SK-N-SH (cell line): ENCODE measurements at regions of chr17 and their contacts with region 1.

Region 1: DNA sequence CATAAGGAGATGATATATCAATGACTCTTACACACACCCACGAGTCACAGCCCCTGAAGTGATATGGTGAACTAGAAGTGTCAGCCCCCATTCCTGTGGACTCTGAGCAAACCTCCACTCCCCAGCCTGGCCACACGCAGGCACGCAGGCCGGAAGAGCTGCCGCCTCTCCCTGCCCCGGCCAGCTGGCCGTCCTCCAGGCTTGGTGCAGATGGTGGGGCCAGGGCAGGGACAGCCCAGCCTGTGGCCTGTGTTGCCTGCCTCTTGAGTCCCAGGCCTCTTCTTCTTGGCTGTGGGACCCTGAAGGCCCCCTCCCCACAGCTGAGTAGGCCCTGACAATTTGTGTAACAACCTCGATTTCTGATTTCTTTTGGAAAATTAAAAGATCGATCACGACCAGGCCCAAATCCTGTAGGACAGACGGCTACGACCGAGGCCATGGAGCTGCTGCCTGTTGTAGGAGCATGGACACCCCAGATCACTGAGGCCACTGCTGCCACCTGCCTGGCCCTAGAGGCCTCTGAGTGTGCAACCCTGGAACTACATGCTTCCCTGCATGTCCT is 10.0 kb upstream of the MPRIP start:
- DNase-seq: peak; percentile 85
- H3K4me3 ChIP-seq: no peak overlapping the region
- H3K27ac ChIP-seq: peak overlapping the region; percentile 52 to 96
- H3K4me1 ChIP-seq: peaks cover 9 to 65% of the 10 kb centered on the region in 2 experiments; a peak in 3 of 4 replicates
- H3K27me3 ChIP-seq: no peaks in the 10 kb centered on the region
- CTCF ChIP-seq: no peak
- EP300 ChIP-seq: no peak
- RAD21 ChIP-seq: peak; percentile 24; the same call in 1 of the 2 replicates

Region 2: DNA sequence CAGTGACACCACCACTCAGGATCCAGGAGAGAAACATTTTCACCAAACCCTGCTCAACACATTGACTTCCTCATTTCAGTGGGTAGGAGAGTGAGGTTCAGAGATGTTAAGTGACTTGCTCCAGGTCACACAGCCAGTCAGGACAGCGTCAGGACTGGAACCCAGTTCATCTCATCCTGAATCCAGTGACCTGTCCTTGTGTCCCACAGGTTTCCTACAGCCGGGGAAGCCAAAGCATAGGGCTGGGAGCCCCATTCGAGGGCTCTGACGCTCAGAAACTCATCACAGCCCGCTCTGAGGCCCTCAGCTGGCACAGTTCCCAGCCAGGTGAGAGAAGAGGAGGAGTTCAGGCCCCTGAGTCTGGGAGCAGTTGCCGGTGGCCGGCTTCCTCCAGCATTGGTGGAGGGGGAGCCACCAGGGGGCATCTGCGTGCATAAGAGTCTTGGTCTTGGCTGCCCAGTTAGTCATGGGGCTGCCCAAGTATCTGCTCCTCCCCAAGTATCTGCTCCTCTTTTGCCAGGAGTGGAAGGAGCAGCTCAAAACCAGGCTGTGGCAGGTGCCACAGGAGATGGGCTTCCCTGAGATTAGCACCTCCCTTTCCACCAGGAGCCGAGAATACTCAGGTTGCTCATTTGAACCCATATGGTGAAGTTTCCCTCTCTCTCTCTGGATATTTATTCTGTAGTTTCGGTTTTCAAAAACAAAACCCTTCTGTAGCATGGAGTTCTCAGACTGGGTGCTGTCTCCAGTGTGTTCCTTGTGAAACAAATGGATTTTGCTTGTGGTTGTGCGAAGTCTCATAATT is 116.3 kb before region 1 on chr17:
- CTCF ChIA-PET with region 1: no interaction called
- POLR2A ChIA-PET with region 1: no interaction called
- DNase-seq: peak; percentile 64
- H3K4me3 ChIP-seq: no peak overlapping the region
- H3K27ac ChIP-seq: no peak overlapping the region
- H3K4me1 ChIP-seq: no peaks in the 10 kb centered on the region
- H3K27me3 ChIP-seq: peaks cover 30% of the 10 kb centered on the region; the same call in 1 of the 2 replicates
- CTCF ChIP-seq: peak; percentile 47
- EP300 ChIP-seq: no peak
- RAD21 ChIP-seq: peak; percentile 35; the same call in 1 of the 2 replicates

Region 3: DNA sequence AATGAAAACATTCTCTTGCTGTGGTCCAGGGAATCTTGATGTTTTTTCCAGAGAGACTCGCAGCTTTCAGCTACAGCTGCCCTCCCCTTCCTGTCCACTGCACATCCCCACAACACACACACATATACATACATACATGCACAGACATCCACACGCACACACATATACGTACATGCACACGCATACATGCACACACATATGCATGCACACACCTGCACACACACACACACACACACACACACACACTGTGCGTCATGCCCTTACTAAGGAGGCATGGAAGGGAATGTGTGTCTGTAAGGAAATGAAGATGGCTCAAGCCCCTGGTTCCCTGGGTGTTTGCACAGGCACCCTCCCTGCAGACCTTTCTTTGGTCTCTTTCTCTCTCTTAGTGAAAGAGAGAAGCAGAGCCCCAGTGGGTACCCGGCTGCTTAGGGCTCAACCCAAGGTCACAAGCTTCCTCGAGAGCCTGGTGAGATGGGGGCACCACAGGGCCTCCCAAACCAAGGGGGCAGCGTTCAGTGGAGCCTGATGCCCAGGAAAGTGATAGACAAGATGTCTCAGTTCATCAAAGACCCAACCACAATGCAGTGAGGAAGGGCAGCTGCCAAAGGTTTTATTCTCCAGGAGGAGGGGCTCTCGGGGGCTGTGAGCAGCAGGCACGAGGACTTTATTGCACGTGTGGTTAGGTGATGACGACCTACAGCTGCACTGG is 93.6 kb before region 1 on chr17:
- CTCF ChIA-PET with region 1: no interaction called
- POLR2A ChIA-PET with region 1: no interaction called
- DNase-seq: no peak
- H3K4me3 ChIP-seq: no peak overlapping the region
- H3K27ac ChIP-seq: no peak overlapping the region
- H3K4me1 ChIP-seq: no peaks in the 10 kb centered on the region; a peak in 1 of 4 replicates
- H3K27me3 ChIP-seq: no peaks in the 10 kb centered on the region; the same call in 1 of the 2 replicates
- CTCF ChIP-seq: no peak
- EP300 ChIP-seq: no peak
- RAD21 ChIP-seq: no peak

Region 4: GRCh38 chr17:17001874-17002520 is 30.2 kb before region 1 on chr17:
- CTCF ChIA-PET with region 1: interaction called, 11 read pairs
- POLR2A ChIA-PET with region 1: no interaction called
- DNase-seq: peak; percentile 92
- H3K4me3 ChIP-seq: no peak overlapping the region
- H3K27ac ChIP-seq: no peak overlapping the region
- H3K4me1 ChIP-seq: no peaks in the 10 kb centered on the region; a peak in 1 of 4 replicates
- H3K27me3 ChIP-seq: no peaks in the 10 kb centered on the region; the same call in 1 of the 2 replicates
- CTCF ChIP-seq: peak; percentile 98
- EP300 ChIP-seq: no peak
- RAD21 ChIP-seq: peak; percentile 94

Region 5: DNA sequence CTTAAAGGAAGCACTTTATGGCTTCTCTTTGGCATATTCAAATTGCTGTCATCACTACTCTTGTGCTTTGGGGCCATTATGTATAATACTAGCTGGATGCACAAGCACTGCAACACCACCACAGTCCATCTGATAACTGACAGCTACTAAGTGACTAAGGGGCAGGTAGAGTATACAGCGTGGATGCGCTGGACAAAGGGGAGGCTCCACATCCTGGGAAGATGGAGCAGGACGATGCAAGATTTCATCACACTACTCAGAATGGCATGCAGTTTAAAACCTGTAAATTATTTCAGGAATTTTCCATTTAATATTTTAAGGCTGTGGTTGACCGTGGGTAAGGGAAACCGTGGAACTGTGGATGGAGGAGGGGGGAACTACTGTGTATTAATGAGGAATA is 35.0 kb after region 1 on chr17:
- CTCF ChIA-PET with region 1: no interaction called
- POLR2A ChIA-PET with region 1: no interaction called
- DNase-seq: no peak
- H3K4me3 ChIP-seq: no peak overlapping the region
- H3K27ac ChIP-seq: no peak overlapping the region; a peak in 1 of 4 replicates
- H3K4me1 ChIP-seq: peaks cover 7 to 18% of the 10 kb centered on the region in 2 experiments; a peak in 3 of 4 replicates
- H3K27me3 ChIP-seq: no peaks in the 10 kb centered on the region
- CTCF ChIP-seq: no peak
- EP300 ChIP-seq: no peak
- RAD21 ChIP-seq: no peak